ENCODE measurements at regions of chr2 and their contacts with region 1.

Region 1: GRCh38 chr2:68282811-68283418 is 30.6 kb upstream of the PPP3R1 start:
- DNase-seq: no peak
- H3K4me3 Mint-ChIP-seq: no peak overlapping the region
- H3K27ac Mint-ChIP-seq: no peak overlapping the region
- H3K4me1 Mint-ChIP-seq: peaks cover 2% of the 10 kb centered on the region
- H3K27me3 Mint-ChIP-seq: peaks cover 60% of the 10 kb centered on the region

Region 2: DNA sequence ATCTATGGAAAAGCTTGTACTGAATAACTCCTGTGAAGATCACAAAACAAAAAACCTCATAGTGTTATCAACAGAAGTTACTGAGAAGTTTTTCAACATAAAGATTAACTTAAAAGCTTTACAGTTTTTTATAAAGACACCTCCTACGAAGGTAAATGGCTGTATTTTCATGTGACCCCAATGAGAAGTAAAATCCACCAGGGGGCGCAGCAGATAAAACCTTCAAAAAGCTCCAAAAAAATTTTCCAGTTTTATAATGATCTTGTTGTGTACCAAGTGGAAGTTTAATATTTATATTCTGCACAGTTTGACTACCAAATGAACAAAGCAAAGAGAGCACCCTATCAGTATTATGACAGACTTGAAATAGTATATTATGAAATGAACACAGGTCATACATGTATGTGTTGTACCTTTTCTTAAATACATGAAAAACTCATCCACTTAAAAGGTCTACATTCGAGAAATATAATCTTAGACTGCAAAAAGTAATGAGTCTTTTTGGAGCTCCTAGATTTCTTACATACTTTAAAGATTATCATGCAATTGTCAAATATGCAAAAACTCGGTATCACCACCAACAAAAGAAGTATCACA is 86.7 kb before region 1 on chr2:
- intact Hi-C with region 1: loop called (anchors 5 kb)
- DNase-seq: no peak
- H3K4me3 Mint-ChIP-seq: no peak overlapping the region
- H3K27ac Mint-ChIP-seq: no peak overlapping the region
- H3K4me1 Mint-ChIP-seq: peaks cover 34% of the 10 kb centered on the region
- H3K27me3 Mint-ChIP-seq: no peaks in the 10 kb centered on the region